ENCODE measurements at regions of chr2 and their contacts with region 1.

Region 1: DNA sequence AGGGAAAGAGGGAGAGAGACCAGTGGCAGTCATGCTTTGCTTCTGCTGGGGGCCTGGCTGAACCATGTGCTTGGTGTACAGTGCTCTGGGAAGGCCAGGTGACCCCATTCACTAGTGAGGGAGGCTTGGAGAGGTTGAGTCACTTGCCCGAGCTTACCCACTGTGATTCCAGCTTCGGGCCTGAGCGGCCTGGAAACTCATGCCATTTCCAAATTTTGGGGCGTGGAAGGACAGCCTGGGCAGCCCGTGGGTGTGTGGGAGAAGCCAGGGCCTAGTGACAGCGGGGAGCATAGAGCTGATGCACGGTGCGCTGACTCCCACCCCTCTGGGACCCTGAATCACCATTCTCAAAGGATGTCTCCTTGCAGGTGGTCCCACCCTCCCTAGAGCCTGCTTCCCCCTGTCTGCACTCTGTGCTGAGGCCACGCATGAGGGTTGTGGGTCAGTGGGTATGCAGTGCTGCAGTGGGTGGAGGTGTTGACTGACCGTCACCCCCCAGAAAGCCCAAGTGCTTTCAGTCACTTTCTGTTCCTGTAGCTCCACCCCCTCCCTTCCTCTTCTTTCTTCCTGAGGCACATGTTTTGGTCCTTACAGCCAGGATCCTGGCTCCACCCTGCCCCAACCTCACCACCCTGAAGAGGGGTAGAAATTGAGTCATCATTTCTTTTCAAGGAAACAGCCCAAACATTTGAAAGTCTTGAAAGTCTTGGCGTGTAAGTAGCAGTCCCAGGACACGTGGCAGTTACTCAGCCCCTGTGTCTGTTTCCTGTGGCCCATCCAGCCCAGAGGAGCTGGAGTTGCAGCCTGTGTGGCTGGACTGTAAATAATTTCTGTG is 69.3 kb upstream of the MCFD2 start:
- DNase-seq: peak; percentile 66
- H3K4me3 Mint-ChIP-seq: peak overlapping the region; percentile 32
- H3K27ac Mint-ChIP-seq: peak overlapping the region; percentile 97
- H3K4me1 Mint-ChIP-seq: peaks cover 52% of the 10 kb centered on the region
- H3K27me3 Mint-ChIP-seq: no peaks in the 10 kb centered on the region
- CTCF ChIP-seq: no peak

Region 2: DNA sequence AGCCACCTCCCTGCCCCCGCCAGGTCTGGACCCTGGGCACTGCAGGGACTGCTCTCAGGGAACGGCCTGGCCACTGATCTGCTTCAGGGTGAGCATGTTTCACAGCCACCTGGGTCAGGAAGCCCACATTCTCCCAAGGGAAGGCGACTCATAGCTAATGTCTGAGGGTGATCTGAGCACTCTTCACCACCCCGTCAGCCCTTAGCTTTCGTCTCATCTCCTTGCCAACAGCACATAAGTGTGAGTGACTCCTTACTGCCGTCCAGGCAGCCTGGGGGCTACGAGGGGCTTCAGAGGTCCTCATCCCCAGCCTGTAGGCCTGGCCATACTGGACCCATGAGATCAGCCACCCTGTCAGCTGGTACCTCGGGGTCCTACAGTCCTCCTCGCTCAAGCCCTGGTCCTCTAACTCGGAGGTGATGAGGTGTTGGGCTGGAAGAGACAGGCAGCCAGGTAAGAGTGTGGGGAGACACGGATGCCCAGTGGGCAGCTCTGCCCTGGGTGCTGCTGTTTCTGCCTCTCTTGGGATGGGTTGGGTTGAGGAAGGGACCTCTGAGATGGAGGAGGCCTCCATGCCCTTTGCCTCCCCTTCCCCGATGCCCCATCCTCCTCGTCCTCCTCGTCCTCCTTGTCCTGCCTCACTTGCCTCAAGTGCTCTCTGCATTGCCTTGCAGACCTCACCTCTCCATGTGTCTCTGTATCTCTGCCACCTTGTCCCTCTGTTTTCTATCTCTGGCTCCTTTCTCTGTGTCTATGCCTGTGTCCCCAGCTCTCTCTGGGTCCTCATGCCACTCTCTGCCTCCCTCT is 157.0 kb before region 1 on chr2:
- CTCF ChIA-PET with region 1: no interaction called
- intact Hi-C with region 1: no loop called
- DNase-seq: no peak
- H3K4me3 Mint-ChIP-seq: no peak overlapping the region
- H3K27ac Mint-ChIP-seq: no peak overlapping the region
- H3K4me1 Mint-ChIP-seq: no peaks in the 10 kb centered on the region
- H3K27me3 Mint-ChIP-seq: peaks cover 48% of the 10 kb centered on the region
- CTCF ChIP-seq: no peak

Region 3: GRCh38 chr2:46876741-46877384 is 108.0 kb before region 1 on chr2:
- CTCF ChIA-PET with region 1: no interaction called
- intact Hi-C with region 1: no loop called
- DNase-seq: peak; percentile 41
- H3K4me3 Mint-ChIP-seq: no peak overlapping the region
- H3K27ac Mint-ChIP-seq: no peak overlapping the region
- H3K4me1 Mint-ChIP-seq: peaks cover 13% of the 10 kb centered on the region
- H3K27me3 Mint-ChIP-seq: no peaks in the 10 kb centered on the region
- CTCF ChIP-seq: peak; percentile 51

Region 4: DNA sequence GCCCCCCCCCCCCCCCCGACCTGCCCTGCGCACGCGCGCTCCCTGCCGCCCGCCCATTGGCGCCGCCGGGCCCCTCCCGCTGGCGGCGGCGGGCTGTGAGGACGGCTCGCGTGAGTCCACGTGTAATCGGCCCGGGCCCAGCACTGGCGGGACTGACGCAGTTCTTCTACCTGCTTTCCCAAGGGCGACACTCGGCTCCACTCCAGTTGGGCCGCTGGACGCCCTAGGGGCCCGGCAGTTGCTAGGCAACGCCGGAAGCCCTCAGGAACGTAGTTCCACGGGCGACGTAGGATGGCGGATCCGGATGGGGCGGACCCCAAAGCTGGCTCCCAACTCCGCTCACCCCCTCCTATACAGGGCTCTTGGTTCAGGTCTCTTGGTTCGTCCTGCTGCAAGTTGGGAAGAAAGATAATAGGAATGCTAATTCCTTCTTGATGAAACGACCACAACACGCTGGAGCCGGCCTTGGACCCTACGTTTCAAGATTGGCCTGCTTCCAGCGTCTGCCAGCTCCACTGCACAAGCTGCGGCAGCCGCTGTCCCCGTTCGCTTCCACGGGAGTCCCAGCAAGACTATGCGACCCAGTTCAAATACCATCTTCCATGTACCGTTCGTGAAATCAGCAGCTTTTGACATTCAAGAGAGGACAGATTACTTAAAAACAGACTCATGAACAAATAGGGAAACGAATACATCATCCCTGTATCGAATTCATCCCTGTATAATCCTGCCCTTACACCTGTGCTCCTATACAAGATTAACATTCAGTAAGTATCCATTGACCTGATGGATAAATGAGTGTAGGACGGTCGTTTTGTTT is 68.8 kb before region 1 on chr2:
- CTCF ChIA-PET with region 1: no interaction called
- intact Hi-C with region 1: no loop called
- DNase-seq: peak; percentile 86
- H3K4me3 Mint-ChIP-seq: peak overlapping the region; percentile 88
- H3K27ac Mint-ChIP-seq: peak overlapping the region; percentile 86
- H3K4me1 Mint-ChIP-seq: peaks cover 38% of the 10 kb centered on the region
- H3K27me3 Mint-ChIP-seq: no peaks in the 10 kb centered on the region
- CTCF ChIP-seq: no peak

Region 5: DNA sequence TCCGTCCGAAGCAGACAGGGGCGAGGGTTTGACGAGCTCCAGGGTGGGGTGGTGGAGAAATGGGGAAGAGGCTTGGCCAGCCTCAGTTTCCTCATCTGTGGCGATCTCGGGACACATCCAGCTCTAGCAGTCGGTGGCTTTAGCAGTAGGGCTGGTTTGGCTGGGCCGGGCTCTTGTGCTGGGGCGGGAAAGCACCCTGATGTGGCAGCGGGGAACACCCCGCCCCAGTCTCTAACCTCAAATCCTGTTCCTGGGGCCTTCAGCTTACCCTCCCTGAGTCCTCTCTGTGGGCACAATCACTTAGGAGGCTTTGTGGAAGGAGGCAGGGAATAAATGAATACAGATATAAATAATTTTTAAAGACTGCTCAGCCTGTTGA is 42.7 kb before region 1 on chr2:
- CTCF ChIA-PET with region 1: no interaction called
- intact Hi-C with region 1: loop called (anchors 1 kb)
- DNase-seq: peak; percentile 25
- H3K4me3 Mint-ChIP-seq: peak overlapping the region; percentile 97
- H3K27ac Mint-ChIP-seq: peak overlapping the region; percentile 68
- H3K4me1 Mint-ChIP-seq: peaks cover 30% of the 10 kb centered on the region
- H3K27me3 Mint-ChIP-seq: no peaks in the 10 kb centered on the region
- CTCF ChIP-seq: no peak

Region 6: DNA sequence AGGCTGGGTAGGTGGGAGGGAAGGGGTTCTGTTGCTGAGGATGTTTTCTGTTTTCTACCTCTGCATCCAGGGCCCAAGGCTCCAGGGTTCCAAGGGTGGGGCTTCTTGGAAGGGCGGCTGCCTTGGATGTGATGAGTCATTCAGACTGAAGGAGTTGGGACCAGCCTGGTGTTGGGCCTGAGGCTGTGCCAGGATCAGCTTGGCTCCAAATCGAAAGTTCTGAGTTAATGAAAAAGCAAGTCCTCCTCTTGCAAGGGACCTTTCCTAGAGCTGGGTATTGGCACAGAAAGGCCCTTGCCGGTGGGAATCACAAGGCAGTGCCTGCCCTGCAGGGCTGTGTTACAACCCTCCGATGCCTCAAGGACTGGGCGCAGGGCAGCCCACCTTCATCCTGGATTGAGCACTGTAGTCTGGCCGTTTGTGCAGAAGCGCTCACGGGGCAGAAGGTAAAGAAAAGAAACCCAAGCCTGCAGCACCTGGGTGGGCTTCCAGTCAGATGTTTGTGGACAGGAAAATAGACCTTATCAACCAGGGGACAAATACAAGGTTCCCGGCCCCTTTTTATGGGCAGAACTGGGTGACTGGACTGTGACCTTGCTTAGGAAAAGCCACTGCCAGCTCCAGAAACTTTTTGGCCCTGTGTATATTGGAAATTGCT is 16.7 kb before region 1 on chr2:
- CTCF ChIA-PET with region 1: interaction called, 6 read pairs
- intact Hi-C with region 1: loop called (anchors 2 kb)
- DNase-seq: peak; percentile 80
- H3K4me3 Mint-ChIP-seq: peak overlapping the region; percentile 57
- H3K27ac Mint-ChIP-seq: peak overlapping the region; percentile 83
- H3K4me1 Mint-ChIP-seq: peaks cover 60% of the 10 kb centered on the region
- H3K27me3 Mint-ChIP-seq: no peaks in the 10 kb centered on the region
- CTCF ChIP-seq: no peak